ENCODE measurements at regions of chr22 and their contacts with region 1.

Region 1: GRCh38 chr22:20550821-20551744 is 43.7 kb downstream of the MED15 start:
- DNase-seq: peak; percentile 86
- H3K4me3 Mint-ChIP-seq: peak overlapping the region; percentile 69
- H3K27ac Mint-ChIP-seq: peak overlapping the region; percentile 100
- H3K4me1 Mint-ChIP-seq: peaks cover 91% of the 10 kb centered on the region
- H3K27me3 Mint-ChIP-seq: no peaks in the 10 kb centered on the region

Region 2: GRCh38 chr22:20305931-20306645 is 245.0 kb before region 1 on chr22:
- CTCF ChIA-PET with region 1: no interaction called
- POLR2A ChIA-PET with region 1: no interaction called
- intact Hi-C with region 1: no loop called
- DNase-seq: no peak
- H3K4me3 Mint-ChIP-seq: no peak overlapping the region
- H3K27ac Mint-ChIP-seq: no peak overlapping the region
- H3K4me1 Mint-ChIP-seq: peaks cover 2% of the 10 kb centered on the region
- H3K27me3 Mint-ChIP-seq: peaks cover 3% of the 10 kb centered on the region

Region 3: GRCh38 chr22:20319745-20320658 is 231.1 kb before region 1 on chr22 and contains the start of gene DGCR6L:
- CTCF ChIA-PET with region 1: no interaction called
- POLR2A ChIA-PET with region 1: no interaction called
- intact Hi-C with region 1: loop called (anchors 5 kb)
- DNase-seq: peak; percentile 98
- H3K4me3 Mint-ChIP-seq: peak within 1 kb of the TSS; percentile 93
- H3K27ac Mint-ChIP-seq: peak within 1 kb of the TSS; percentile 81
- H3K4me1 Mint-ChIP-seq: peaks cover 65% of the 10 kb centered on the region
- H3K27me3 Mint-ChIP-seq: no peaks in the 10 kb centered on the region
- total RNA-seq, gene DGCR6L: 26.9 to 31.3 TPM

Region 4: DNA sequence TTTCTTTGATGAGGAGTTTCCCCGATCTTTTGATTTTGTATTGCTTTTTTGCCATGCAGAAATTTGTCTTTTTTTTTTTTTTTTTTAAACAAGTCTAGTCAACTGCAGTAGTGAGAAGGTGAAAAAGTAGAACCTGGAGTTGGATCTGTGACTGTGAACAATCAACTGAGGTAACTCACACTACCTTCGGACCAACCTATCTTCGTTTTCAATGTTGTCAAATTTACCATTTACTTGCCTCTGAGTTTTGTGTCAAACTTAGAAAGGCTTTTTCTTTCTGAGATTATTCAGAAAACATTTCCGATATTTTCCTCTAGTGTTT is 76.0 kb before region 1 on chr22:
- CTCF ChIA-PET with region 1: no interaction called
- POLR2A ChIA-PET with region 1: no interaction called
- intact Hi-C with region 1: loop called (anchors 2 kb)
- DNase-seq: no peak
- H3K4me3 Mint-ChIP-seq: peak overlapping the region; percentile 56
- H3K27ac Mint-ChIP-seq: peak overlapping the region; percentile 87
- H3K4me1 Mint-ChIP-seq: peaks cover 37% of the 10 kb centered on the region
- H3K27me3 Mint-ChIP-seq: no peaks in the 10 kb centered on the region

Region 5: GRCh38 chr22:20523086-20523983 is 27.7 kb before region 1 on chr22:
- CTCF ChIA-PET with region 1: interaction called, 4 read pairs
- POLR2A ChIA-PET with region 1: no interaction called
- intact Hi-C with region 1: loop called (anchors 1 kb)
- DNase-seq: peak; percentile 57
- H3K4me3 Mint-ChIP-seq: no peak overlapping the region
- H3K27ac Mint-ChIP-seq: peak overlapping the region; percentile 75
- H3K4me1 Mint-ChIP-seq: peaks cover 73% of the 10 kb centered on the region
- H3K27me3 Mint-ChIP-seq: no peaks in the 10 kb centered on the region

Region 6: GRCh38 chr22:20562461-20563247 is 11.6 kb after region 1 on chr22:
- CTCF ChIA-PET with region 1: interaction called, 292 read pairs
- POLR2A ChIA-PET with region 1: interaction called, 47 read pairs
- intact Hi-C with region 1: loop called (anchors 1 kb)
- DNase-seq: no peak
- H3K4me3 Mint-ChIP-seq: no peak overlapping the region
- H3K27ac Mint-ChIP-seq: peak overlapping the region; percentile 78
- H3K4me1 Mint-ChIP-seq: peaks cover 62% of the 10 kb centered on the region
- H3K27me3 Mint-ChIP-seq: no peaks in the 10 kb centered on the region

Region 7: GRCh38 chr22:20568989-20569769 is 18.1 kb after region 1 on chr22:
- CTCF ChIA-PET with region 1: interaction called, 292 read pairs
- POLR2A ChIA-PET with region 1: interaction called, 47 read pairs
- intact Hi-C with region 1: loop called (anchors 2 kb)
- DNase-seq: peak; percentile 86
- H3K4me3 Mint-ChIP-seq: no peak overlapping the region
- H3K27ac Mint-ChIP-seq: peak overlapping the region; percentile 72
- H3K4me1 Mint-ChIP-seq: peaks cover 75% of the 10 kb centered on the region
- H3K27me3 Mint-ChIP-seq: no peaks in the 10 kb centered on the region

Region 8: GRCh38 chr22:20583471-20583922 is 32.4 kb after region 1 on chr22:
- CTCF ChIA-PET with region 1: no interaction called
- POLR2A ChIA-PET with region 1: no interaction called
- intact Hi-C with region 1: no loop called
- DNase-seq: no peak
- H3K4me3 Mint-ChIP-seq: no peak overlapping the region
- H3K27ac Mint-ChIP-seq: no peak overlapping the region
- H3K4me1 Mint-ChIP-seq: peaks cover 12% of the 10 kb centered on the region
- H3K27me3 Mint-ChIP-seq: no peaks in the 10 kb centered on the region